Endothelial cell of umbilical vein (primary cell): ENCODE measurements at regions of chr22 and their contacts with region 1.

Region 1: DNA sequence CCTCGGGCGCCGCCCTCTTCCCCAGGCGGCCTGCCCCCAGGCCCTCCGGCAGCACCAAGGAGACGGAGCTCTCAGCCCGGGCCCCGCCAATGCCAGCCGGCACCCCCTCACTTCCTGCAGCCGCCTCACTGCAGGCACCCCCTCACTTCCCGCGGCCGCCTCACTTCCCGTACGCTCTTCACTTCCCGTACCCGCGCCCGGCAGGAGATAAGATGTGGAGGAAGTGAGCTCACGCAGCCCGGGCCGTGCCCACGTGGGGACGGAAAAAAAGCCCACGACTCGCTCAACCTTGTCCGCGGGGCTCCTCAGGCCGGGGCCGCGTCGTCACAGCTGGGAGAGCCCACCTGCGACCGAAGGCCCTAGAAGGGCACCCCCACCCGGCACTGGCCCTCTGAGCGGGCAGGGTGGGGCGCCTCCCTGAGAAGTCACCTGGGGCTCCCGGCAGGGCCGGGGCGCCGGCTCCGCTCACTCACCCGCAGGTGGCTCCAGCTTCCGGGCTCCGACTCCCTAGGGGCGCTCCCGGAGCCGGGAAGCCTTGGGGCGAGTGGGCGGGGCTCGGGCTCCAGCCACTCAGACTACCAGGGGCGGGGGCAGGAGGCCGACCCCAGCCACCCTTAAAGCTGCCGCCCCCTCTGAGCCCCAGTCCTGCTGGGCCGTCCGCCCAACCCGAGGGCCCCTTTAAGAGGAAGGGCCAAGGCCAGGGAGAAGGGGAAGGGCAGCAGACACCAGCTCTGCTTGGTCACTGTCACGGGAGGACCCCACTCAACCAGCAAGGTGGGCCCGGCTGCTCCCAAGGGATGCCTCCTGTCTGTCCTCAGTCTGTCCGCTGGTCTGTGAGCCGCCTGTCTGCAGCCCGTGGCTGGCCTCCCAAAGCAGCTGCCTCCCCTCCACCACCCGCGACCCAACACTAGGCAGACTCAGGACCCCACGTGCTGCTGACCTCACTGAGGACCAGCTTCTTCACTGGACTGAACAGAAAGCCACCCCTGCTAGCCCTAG is 31.4 kb downstream of the PISD start:
- DNase-seq: peak; percentile 89
- H3K4me3 ChIP-seq: peak overlapping the region; percentile 42 to 58 (median 43)
- H3K27ac ChIP-seq: peak overlapping the region; percentile 81
- H3K4me1 ChIP-seq: peaks cover 38% of the 10 kb centered on the region
- H3K27me3 ChIP-seq: no peaks in the 10 kb centered on the region
- CTCF ChIP-seq: no peak
- POLR2A ChIP-seq: peak; percentile 39

Region 2: GRCh38 chr22:31345331-31346254 is 285.0 kb before region 1 on chr22:
- CTCF ChIA-PET with region 1: no interaction called
- POLR2A ChIA-PET with region 1: no interaction called
- dilution Hi-C with region 1: no loop called
- intact Hi-C with region 1: loop called (anchors 2 kb)
- DNase-seq: peak; percentile 80
- H3K4me3 ChIP-seq: peak overlapping the region; percentile 40 to 75 (median 49)
- H3K27ac ChIP-seq: no peak overlapping the region
- H3K4me1 ChIP-seq: peaks cover 39% of the 10 kb centered on the region
- H3K27me3 ChIP-seq: no peaks in the 10 kb centered on the region
- CTCF ChIP-seq: peak; percentile 79 to 87
- POLR2A ChIP-seq: peak; percentile 43

Region 3: DNA sequence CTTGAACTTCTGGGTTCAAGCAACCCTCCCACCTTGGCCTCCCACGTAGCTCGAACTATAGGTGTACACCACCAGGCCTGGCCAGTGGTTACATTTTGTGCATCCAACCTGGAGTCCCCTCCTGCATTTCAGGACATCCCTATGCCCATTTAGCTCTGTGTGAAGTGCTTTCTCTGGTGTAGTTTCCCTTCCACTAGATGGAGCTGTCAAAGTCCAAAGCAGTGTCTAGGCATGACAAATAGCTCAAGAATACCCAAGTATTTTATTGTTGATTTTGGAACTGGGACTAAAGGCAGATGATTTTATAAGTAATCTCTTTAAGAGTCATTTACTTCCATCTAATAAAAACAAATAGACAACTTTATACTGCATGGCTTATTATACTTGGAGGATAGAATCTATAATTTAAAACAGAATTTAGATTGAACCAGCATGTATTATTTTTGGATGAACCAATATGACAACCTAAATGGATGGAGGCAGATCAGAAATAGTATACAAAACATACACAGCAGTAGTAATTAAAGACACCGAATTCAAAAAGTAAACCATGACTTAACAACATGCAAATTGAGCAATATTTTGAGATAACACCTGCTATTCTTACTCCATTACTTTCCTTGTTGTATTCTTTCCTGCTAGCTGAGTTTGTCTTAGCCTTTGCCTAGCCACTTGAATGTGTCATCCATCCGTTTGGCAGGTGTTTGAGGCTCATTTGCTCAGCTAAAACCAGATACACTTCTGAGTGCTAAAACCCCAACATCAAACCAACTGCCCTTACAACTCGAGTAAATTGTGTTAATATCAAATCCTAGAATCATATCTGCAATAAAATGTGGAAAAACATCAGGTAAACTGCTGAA is 178.7 kb before region 1 on chr22:
- CTCF ChIA-PET with region 1: interaction called, 32 read pairs
- POLR2A ChIA-PET with region 1: no interaction called
- dilution Hi-C with region 1: no loop called
- intact Hi-C with region 1: loop called (anchors 1 kb)
- DNase-seq: peak; percentile 59
- H3K4me3 ChIP-seq: no peak overlapping the region
- H3K27ac ChIP-seq: no peak overlapping the region
- H3K4me1 ChIP-seq: no peaks in the 10 kb centered on the region
- H3K27me3 ChIP-seq: no peaks in the 10 kb centered on the region
- CTCF ChIP-seq: peak; percentile 46 to 53
- POLR2A ChIP-seq: no peak

Region 4: GRCh38 chr22:31489604-31490495 is 140.8 kb before region 1 on chr22 and contains the start of gene EIF4ENIF1:
- CTCF ChIA-PET with region 1: interaction called, 3 read pairs
- POLR2A ChIA-PET with region 1: no interaction called
- dilution Hi-C with region 1: no loop called
- intact Hi-C with region 1: loop called (anchors 1 kb)
- DNase-seq: peak; percentile 86
- H3K4me3 ChIP-seq: peak within 1 kb of the TSS; percentile 85 to 96 (median 87)
- H3K27ac ChIP-seq: peak within 1 kb of the TSS; percentile 84
- H3K4me1 ChIP-seq: peaks cover 24% of the 10 kb centered on the region
- H3K27me3 ChIP-seq: no peaks in the 10 kb centered on the region
- CTCF ChIP-seq: no peak
- POLR2A ChIP-seq: peak; percentile 6
- total RNA-seq, gene EIF4ENIF1: 36.6 and 38.7 TPM in 2 replicates

Region 5: DNA sequence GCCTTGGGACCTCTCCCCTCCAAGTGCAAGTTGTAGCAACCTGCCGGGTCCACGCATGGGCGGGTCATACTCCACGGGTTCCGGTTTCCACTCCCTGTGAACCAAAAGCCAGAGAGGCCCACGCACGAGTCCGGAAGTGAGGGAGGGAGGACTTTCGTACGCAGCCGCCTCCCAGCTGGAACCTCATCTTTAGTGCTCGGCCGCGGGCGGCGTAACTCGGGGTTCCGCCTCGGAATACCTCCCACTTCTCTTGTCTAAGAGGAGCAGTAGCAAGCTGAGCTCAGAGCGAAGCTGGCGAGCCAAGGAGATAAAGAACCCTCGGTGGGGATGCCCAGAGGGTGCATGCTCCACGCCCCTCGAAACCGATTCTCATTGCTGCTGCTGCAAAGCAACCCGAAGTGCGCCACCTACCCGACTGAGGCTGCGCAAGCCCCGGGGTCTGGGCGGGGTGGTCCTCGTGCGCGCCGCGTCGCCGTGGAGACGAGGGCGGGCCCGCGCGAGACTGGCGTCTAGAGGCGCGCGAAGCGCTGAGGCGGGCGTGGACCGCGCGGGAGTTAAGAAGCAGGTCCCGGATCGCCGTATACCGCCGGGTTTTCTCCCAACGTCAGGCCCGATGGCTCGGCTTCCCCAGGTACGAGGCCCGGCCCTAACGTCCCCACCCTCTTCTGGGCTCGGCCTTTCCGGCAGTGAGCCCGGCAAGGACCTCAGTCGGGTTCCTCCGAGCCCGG is 134.5 kb before region 1 on chr22 and contains the start of gene SFI1:
- CTCF ChIA-PET with region 1: interaction called, 3 read pairs
- POLR2A ChIA-PET with region 1: no interaction called
- dilution Hi-C with region 1: no loop called
- intact Hi-C with region 1: loop called (anchors 2 kb)
- DNase-seq: peak; percentile 92
- H3K4me3 ChIP-seq: peak within 1 kb of the TSS; percentile 60 to 85 (median 81)
- H3K27ac ChIP-seq: peak within 1 kb of the TSS; percentile 52
- H3K4me1 ChIP-seq: peaks cover 14% of the 10 kb centered on the region
- H3K27me3 ChIP-seq: no peaks in the 10 kb centered on the region
- CTCF ChIP-seq: peak; percentile 11 to 38
- POLR2A ChIP-seq: peak; percentile 16
- total RNA-seq, gene SFI1: 38.3 and 46.4 TPM in 2 replicates

Region 6: DNA sequence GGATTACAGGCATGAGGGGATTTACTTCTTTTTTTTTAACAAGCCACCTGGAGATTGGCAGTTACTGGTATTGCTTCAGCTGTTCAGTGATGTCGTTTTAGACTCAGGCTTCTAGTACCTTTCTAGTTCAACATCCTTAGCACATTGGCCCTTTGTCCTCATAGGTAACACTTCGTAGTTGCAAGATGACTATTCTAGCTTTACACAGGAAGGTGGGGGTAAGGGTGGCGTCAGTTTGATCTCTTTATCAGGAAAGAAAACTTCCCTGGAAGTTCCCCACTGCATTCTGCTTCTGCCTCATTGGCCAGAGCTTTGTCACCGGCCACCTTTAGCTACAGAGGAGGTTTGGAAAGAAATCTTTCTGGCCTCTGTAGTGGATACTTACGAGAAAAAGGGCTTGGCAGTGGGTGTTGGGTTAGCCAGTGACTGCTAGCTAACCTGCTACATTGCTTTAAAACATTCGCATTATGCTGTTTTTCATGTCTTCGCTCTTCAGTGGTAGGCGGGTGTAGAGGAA is 93.6 kb before region 1 on chr22:
- CTCF ChIA-PET with region 1: no interaction called
- POLR2A ChIA-PET with region 1: no interaction called
- dilution Hi-C with region 1: no loop called
- intact Hi-C with region 1: no loop called
- DNase-seq: peak; percentile 48
- H3K4me3 ChIP-seq: no peak overlapping the region
- H3K27ac ChIP-seq: no peak overlapping the region
- H3K4me1 ChIP-seq: peaks cover 4% of the 10 kb centered on the region
- H3K27me3 ChIP-seq: no peaks in the 10 kb centered on the region
- CTCF ChIP-seq: no peak
- POLR2A ChIP-seq: no peak

Region 7: DNA sequence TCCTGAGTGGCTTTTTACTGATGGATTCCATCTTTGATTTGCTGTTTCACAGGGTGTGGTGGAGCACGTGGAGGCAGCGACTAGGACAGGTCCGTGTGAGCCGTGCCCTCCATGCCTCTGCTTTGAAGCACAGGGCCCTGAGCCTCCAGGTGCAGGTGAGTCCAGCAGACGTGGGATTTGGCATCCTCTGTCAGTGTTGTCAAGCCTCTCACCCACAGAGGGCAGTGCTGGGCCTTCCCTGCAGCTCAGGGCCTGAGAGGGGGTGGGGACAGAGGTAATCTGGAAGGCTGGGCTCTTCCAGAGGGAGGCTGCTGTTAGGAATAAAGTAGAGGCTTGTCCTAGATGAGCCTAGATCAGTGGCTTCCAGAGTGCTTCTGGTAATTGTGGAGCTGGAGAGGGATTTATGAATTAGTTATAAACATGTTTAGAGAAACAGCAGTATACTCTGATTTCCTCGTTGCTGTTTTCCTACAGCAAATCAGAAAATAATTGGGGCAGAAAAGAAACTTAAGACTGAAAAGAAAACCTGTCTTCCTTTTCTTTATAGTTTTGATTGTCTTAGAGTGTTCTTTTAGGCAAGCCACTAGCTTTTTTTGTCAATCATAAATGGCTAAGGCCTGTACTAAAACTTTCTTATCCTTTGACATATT is 69.3 kb before region 1 on chr22:
- CTCF ChIA-PET with region 1: interaction called, 216 read pairs
- POLR2A ChIA-PET with region 1: no interaction called
- dilution Hi-C with region 1: no loop called
- intact Hi-C with region 1: loop called (anchors 1 kb)
- DNase-seq: peak; percentile 78
- H3K4me3 ChIP-seq: no peak overlapping the region
- H3K27ac ChIP-seq: no peak overlapping the region
- H3K4me1 ChIP-seq: peaks cover 2% of the 10 kb centered on the region
- H3K27me3 ChIP-seq: no peaks in the 10 kb centered on the region
- CTCF ChIP-seq: peak; percentile 80 to 91
- POLR2A ChIP-seq: no peak

Region 8: GRCh38 chr22:31652911-31653684 is 22.5 kb after region 1 on chr22:
- CTCF ChIA-PET with region 1: no interaction called
- POLR2A ChIA-PET with region 1: no interaction called
- dilution Hi-C with region 1: no loop called
- intact Hi-C with region 1: no loop called
- DNase-seq: no peak
- H3K4me3 ChIP-seq: no peak overlapping the region
- H3K27ac ChIP-seq: no peak overlapping the region
- H3K4me1 ChIP-seq: peaks cover 2% of the 10 kb centered on the region
- H3K27me3 ChIP-seq: no peaks in the 10 kb centered on the region
- CTCF ChIP-seq: no peak
- POLR2A ChIP-seq: no peak